ENCODE measurements at regions of chr10 and their contacts with region 1.

Region 1: GRCh38 chr10:97891497-97892167 is 42.0 kb downstream of the GOLGA7B start:
- DNase-seq: no peak
- ATAC-seq: no peak
- H3K4me3 ChIP-seq: no peak overlapping the region
- H3K27ac ChIP-seq: no peak overlapping the region
- H3K4me1 ChIP-seq: peaks cover 25% of the 10 kb centered on the region
- H3K27me3 ChIP-seq: no peaks in the 10 kb centered on the region
- CTCF ChIP-seq: no peak

Region 2: GRCh38 chr10:97849687-97850402 is 41.8 kb before region 1 on chr10 and contains the start of gene GOLGA7B:
- CTCF ChIA-PET with region 1: interaction called, 11 read pairs
- POLR2A ChIA-PET with region 1: no interaction called
- intact Hi-C with region 1: no loop called
- DNase-seq: peak; percentile 35
- ATAC-seq: peak; percentile 81
- H3K4me3 ChIP-seq: peak within 1 kb of the TSS; percentile 68
- H3K27ac ChIP-seq: peak within 1 kb of the TSS; percentile 62
- H3K4me1 ChIP-seq: peaks cover 3% of the 10 kb centered on the region; the same call in 1 of the 2 replicates
- H3K27me3 ChIP-seq: no peaks in the 10 kb centered on the region
- CTCF ChIP-seq: no peak
- total RNA-seq, gene GOLGA7B: 0.26 and 0.29 TPM in 2 replicates